PC-9 (cell line): ENCODE measurements at regions of chr18 and their contacts with region 1.

Region 1: DNA sequence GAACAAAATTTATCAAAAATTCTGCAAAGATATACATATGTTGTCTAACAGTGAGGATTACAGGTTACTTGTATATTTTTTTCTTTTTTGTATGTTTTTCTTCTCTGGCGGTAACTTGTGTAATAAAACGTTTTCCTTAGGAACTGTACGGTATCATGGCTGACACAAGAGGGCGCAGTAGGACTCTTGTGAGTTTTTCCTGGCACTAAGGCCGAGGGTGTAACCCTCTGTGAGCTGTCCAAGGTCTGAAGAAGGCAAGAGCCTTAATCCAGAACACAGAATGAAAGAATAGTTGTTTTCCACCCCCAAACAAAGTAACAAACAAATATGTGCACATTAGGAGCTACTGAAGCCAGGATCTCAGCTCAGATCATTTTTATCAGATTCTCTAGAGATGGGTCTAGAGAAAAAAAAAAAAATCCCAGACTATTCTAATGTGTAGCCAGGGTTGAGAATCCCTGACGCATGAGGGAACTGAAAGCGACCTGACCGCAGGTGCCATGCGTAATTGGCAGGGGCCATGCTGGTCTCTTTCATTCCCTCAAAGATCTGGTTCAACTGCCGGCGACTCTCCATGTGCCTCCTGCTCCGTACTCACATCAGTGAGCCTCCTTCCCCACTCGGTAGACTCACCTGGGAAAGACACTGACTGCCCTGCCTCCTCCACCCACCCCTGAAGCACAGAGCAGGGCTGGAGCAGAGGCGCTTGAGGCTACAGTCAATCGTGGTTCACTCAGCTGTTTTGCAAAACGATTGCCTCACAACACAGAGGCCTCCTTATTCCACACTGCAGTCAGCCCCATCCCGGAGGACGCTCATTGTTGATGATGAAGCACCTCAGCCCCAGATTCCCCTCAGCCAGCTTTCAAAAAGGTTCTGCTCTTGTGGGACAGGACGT is 26.9 kb downstream of the TMEM200C start:
- DNase-seq: peak; percentile 54 to 55
- H3K4me3 ChIP-seq: no peak overlapping the region
- H3K27ac ChIP-seq: no peak overlapping the region
- H3K4me1 ChIP-seq: no peaks in the 10 kb centered on the region
- H3K27me3 ChIP-seq: no peaks in the 10 kb centered on the region
- CTCF ChIP-seq: peak; percentile 83

Region 2: DNA sequence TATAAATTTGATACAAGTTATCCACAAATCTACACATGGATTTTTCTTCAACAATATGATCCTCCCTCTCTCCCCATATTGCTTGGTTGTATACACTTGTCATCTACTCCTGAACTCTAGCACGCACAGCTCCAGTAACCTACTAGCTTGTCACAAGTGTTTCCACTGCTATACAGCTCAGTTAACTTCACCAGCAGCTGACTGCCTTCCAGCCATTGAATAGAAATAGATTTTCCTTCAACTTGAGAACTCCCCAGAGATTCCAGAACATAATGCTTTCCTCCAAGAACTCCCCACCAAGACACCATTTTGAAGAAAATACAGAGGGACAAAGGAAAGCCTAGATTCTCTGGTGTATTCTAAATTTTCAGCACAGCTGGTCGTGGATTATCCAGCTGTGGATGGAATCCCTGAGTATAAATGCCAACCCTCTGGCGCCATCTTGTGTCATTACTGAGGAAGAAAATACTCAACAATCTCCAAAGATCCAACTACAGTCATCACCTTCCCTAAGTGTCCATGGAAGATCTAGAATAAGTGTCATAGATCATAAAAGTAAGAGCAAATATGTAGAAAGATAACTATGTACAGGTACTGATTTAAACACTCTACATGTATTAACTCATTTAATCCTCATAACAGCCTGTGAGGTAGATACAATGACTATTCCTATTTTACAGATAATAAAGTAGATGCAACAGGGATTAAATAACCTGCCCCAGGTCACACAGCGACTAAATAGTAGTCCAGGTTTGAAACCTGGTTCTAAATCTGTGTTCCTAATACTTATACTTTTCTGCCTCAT is 1017.7 kb after region 1 on chr18:
- CTCF ChIA-PET with region 1: no interaction called
- POLR2A ChIA-PET with region 1: no interaction called
- intact Hi-C with region 1: loop called (anchors 1 kb)
- DNase-seq: peak in 1 of 2 experiments; percentile 29
- H3K4me3 ChIP-seq: no peak overlapping the region
- H3K27ac ChIP-seq: no peak overlapping the region
- H3K4me1 ChIP-seq: no peaks in the 10 kb centered on the region
- H3K27me3 ChIP-seq: peaks cover 45% of the 10 kb centered on the region
- CTCF ChIP-seq: peak; percentile 76